ENCODE measurements at regions of chr15 and their contacts with region 1.

Region 1: GRCh38 chr15:79431636-79432344 is at the start of gene MINAR1:
- DNase-seq: peak; percentile 6
- ATAC-seq: peak; percentile 88
- H3K4me3 ChIP-seq: peak within 1 kb of the TSS; percentile 12 to 64 (median 16); a peak in 3 of 6 replicates
- H3K27ac ChIP-seq: no peak within 1 kb of the TSS
- H3K4me1 ChIP-seq: 0 out of 2 replicates have a peak, but pooled peaks cover 5% of the 10 kb centered on the region
- H3K27me3 ChIP-seq: peaks cover 7 to 68% of the 10 kb centered on the region in 2 experiments; a peak in 4 of 5 replicates
- CTCF ChIP-seq: peak; percentile 29; the same call in 1 of the 2 replicates
- EP300 ChIP-seq: no peak
- POLR2A ChIP-seq: no peak
- RAD21 ChIP-seq: no peak; the same call in 1 of the 2 replicates
- total RNA-seq, gene MINAR1: 0.13 and 0.15 TPM in 2 replicates

Region 2: GRCh38 chr15:79296583-79296982 is 135.2 kb before region 1 on chr15:
- CTCF ChIA-PET with region 1: no interaction called
- POLR2A ChIA-PET with region 1: no interaction called
- in situ Hi-C with region 1: no loop called
- intact Hi-C with region 1: no loop called
- DNase-seq: no peak
- ATAC-seq: no peak
- H3K4me3 ChIP-seq: no peak overlapping the region
- H3K27ac ChIP-seq: no peak overlapping the region
- H3K4me1 ChIP-seq: no peaks in the 10 kb centered on the region
- H3K27me3 ChIP-seq: peaks cover 0 to 19% of the 10 kb centered on the region in 2 experiments; a peak in 2 of 5 replicates
- CTCF ChIP-seq: peak; percentile 18; the same call in 1 of the 2 replicates
- EP300 ChIP-seq: no peak
- POLR2A ChIP-seq: no peak
- RAD21 ChIP-seq: no peak

Region 3: GRCh38 chr15:79394231-79394630 is 37.6 kb before region 1 on chr15:
- CTCF ChIA-PET with region 1: no interaction called
- POLR2A ChIA-PET with region 1: no interaction called
- in situ Hi-C with region 1: no loop called
- intact Hi-C with region 1: loop called (anchors 1 kb)
- DNase-seq: no peak
- ATAC-seq: no peak
- H3K4me3 ChIP-seq: no peak overlapping the region
- H3K27ac ChIP-seq: no peak overlapping the region
- H3K4me1 ChIP-seq: no peaks in the 10 kb centered on the region
- H3K27me3 ChIP-seq: no peaks in the 10 kb centered on the region
- CTCF ChIP-seq: no peak
- EP300 ChIP-seq: no peak
- POLR2A ChIP-seq: no peak
- RAD21 ChIP-seq: no peak

Measured in HepG2 (cell line).